ENCODE measurements at regions of chr11 and their contacts with region 1.

Region 1: GRCh38 chr11:103968685-103969084 is 67.8 kb upstream of the DDI1 start:
- DNase-seq: no peak
- ATAC-seq: no peak
- H3K4me3 ChIP-seq: no peak overlapping the region
- H3K4me3 Mint-ChIP-seq: no peak overlapping the region
- H3K27ac ChIP-seq: no peak overlapping the region
- H3K27ac Mint-ChIP-seq: no peak overlapping the region
- H3K4me1 ChIP-seq: no peaks in the 10 kb centered on the region
- H3K4me1 Mint-ChIP-seq: no peaks in the 10 kb centered on the region
- H3K27me3 ChIP-seq: no peaks in the 10 kb centered on the region
- H3K27me3 Mint-ChIP-seq: no peaks in the 10 kb centered on the region

Region 2: GRCh38 chr11:103929170-103929903 is 39.3 kb before region 1 on chr11:
- CTCF ChIA-PET with region 1: interaction called in 1 of 2 experiments, 21 read pairs
- POLR2A ChIA-PET with region 1: no interaction called
- DNase-seq: no peak
- ATAC-seq: peak in 1 of 4 experiments; percentile 15
- H3K4me3 ChIP-seq: no peak overlapping the region
- H3K4me3 Mint-ChIP-seq: no peak overlapping the region
- H3K27ac ChIP-seq: no peak overlapping the region
- H3K27ac Mint-ChIP-seq: no peak overlapping the region
- H3K4me1 ChIP-seq: no peaks in the 10 kb centered on the region
- H3K4me1 Mint-ChIP-seq: no peaks in the 10 kb centered on the region
- H3K27me3 ChIP-seq: no peaks in the 10 kb centered on the region
- H3K27me3 Mint-ChIP-seq: no peaks in the 10 kb centered on the region

Region 3: DNA sequence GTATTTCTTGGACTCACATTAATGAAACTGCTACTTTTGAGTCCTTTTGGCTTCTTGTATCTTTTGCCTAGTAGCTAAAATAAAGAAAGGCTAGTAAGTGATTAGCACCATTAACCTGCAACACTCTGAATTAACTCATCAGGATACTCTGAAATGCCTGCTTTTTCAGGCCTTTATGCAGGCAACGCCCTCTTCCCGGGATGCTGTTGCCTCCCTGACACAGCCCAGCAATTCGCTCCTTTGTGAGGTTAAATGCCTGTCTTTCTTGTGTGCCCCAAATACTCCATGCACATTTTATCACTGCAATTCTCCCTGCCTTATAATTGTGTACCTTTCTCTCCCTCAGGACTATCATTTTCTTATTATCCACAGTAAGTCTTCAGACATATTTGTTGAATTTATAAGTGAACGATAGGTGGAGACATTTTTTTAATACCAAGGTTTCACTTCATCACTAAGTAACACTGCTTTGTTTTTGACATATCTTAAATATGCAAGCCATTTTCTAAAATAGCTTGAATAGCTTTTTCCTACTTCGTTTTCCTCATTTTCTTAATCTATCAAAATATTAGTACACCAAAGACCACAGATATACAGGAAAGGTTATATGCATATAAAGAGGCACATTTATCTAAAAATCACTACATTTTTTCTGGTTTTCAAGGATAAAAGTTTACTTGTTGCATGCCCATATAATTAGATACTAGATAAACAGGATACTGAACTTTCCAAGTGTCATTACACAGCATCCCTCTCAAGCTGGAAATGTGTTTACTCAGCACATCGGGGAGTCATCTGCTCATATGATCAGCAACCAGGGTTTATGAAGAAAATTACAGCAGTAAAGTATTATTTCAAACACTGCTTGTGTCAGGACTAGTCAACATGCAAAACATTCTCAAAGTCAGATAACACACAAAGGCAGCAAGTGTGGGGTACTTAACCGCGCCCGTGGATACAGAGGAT is 19.2 kb after region 1 on chr11:
- CTCF ChIA-PET with region 1: no interaction called
- POLR2A ChIA-PET with region 1: no interaction called
- DNase-seq: no peak
- ATAC-seq: no peak
- H3K4me3 ChIP-seq: no peak overlapping the region
- H3K4me3 Mint-ChIP-seq: no peak overlapping the region
- H3K27ac ChIP-seq: no peak overlapping the region
- H3K27ac Mint-ChIP-seq: no peak overlapping the region
- H3K4me1 ChIP-seq: no peaks in the 10 kb centered on the region
- H3K4me1 Mint-ChIP-seq: no peaks in the 10 kb centered on the region
- H3K27me3 ChIP-seq: no peaks in the 10 kb centered on the region
- H3K27me3 Mint-ChIP-seq: no peaks in the 10 kb centered on the region

Region 4: DNA sequence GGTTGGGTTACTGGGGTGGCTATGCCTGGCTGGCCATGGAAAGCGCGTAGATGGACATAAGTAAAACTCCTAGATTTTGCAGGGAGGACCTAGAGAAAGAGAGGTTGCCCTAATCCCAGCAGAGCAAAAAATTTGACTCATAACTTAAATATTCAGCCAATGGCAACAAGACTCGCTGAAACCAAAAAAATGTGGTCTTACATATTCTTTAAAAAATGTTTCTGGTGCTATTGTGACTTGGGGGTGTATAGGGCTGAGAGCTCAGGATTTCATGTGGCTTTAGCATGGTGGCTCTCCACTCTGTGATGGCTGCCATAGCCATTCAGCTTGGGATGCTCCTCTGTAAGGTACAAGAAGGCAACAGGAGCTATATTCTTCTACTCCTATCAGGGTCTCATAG is 222.4 kb after region 1 on chr11:
- CTCF ChIA-PET with region 1: no interaction called
- POLR2A ChIA-PET with region 1: no interaction called
- DNase-seq: no peak
- ATAC-seq: no peak
- H3K4me3 ChIP-seq: no peak overlapping the region
- H3K4me3 Mint-ChIP-seq: no peak overlapping the region
- H3K27ac ChIP-seq: no peak overlapping the region
- H3K27ac Mint-ChIP-seq: no peak overlapping the region
- H3K4me1 ChIP-seq: no peaks in the 10 kb centered on the region
- H3K4me1 Mint-ChIP-seq: no peaks in the 10 kb centered on the region
- H3K27me3 ChIP-seq: no peaks in the 10 kb centered on the region
- H3K27me3 Mint-ChIP-seq: no peaks in the 10 kb centered on the region